ENCODE measurements at regions of chr3 and their contacts with region 1.

Region 1: DNA sequence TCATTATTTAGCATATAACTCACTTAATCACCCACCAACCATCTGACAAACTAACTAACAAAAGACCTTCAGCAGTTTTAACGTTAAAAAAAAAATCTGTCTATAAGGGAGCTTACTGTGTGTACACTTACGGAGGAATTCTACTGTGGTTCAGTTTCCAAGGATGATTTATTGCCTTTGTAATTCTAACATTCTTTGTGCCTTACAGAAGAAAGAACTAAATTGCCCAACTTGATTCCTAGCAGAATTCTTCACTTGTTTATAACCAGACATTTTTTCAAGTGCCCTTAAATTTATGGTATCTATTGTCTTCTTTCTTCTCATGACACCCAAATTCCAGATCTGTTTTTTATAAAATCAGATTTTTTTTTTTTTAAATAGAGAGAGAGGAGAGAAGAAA is 119.7 kb upstream of the IGSF10 start:
- DNase-seq: peak; percentile 23
- H3K4me3 ChIP-seq: no peak overlapping the region
- H3K27ac ChIP-seq: no peak overlapping the region
- H3K4me1 ChIP-seq: no peaks in the 10 kb centered on the region
- H3K27me3 ChIP-seq: peaks cover 5% of the 10 kb centered on the region
- CTCF ChIP-seq: no peak

Region 2: DNA sequence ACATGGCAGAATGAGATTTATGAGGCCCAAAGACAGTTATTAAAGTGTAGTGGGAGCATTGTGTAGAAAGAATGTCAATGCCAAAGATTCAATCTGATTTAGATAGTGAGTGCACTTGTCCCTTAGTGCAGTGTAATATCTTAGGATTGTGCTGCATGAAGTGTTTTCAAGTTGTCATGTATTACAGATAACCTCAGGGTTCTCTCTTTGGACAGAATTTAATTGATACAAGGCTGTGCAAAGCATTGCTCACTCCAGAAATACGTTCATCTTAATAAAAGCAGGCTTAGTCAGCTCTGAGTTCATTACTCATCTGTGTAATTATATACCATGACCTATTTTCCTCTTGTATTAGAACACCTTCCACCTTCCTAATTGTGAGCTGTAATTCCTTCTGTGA is 361.5 kb before region 1 on chr3:
- CTCF ChIA-PET with region 1: no interaction called
- dilution Hi-C with region 1: no loop called
- in situ Hi-C with region 1: no loop called
- intact Hi-C with region 1: no loop called
- DNase-seq: peak; percentile 82
- H3K4me3 ChIP-seq: no peak overlapping the region
- H3K27ac ChIP-seq: no peak overlapping the region
- H3K4me1 ChIP-seq: peaks cover 10% of the 10 kb centered on the region
- H3K27me3 ChIP-seq: no peaks in the 10 kb centered on the region
- CTCF ChIP-seq: no peak

Region 3: GRCh38 chr3:151611419-151611818 is 30.8 kb after region 1 on chr3:
- CTCF ChIA-PET with region 1: no interaction called
- dilution Hi-C with region 1: no loop called
- in situ Hi-C with region 1: no loop called
- intact Hi-C with region 1: no loop called
- DNase-seq: no peak
- H3K4me3 ChIP-seq: no peak overlapping the region
- H3K27ac ChIP-seq: no peak overlapping the region
- H3K4me1 ChIP-seq: no peaks in the 10 kb centered on the region
- H3K27me3 ChIP-seq: peaks cover 5% of the 10 kb centered on the region
- CTCF ChIP-seq: no peak

Region 4: DNA sequence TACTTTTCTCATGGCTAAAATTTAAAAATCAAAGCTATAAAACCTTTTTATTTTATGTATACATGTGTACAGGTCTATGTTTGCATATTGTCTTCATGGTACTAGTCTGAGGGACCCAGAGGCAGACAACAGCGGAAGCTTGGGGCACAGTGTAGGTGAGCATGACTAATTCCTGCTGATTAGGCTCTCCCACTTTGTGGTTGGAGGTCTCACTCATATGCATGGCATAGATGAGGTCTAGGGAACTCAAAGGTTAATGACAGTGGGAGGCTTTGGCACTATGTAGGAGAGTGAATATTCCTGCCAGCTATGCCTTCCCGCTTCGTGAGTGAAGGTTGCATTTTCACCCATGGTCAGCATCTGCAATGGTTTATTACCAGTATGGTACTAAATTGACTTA is 105.7 kb after region 1 on chr3:
- CTCF ChIA-PET with region 1: no interaction called
- dilution Hi-C with region 1: loop called (anchors 5 kb)
- in situ Hi-C with region 1: no loop called
- intact Hi-C with region 1: no loop called
- DNase-seq: peak; percentile 6
- H3K4me3 ChIP-seq: no peak overlapping the region
- H3K27ac ChIP-seq: no peak overlapping the region
- H3K4me1 ChIP-seq: no peaks in the 10 kb centered on the region
- H3K27me3 ChIP-seq: peaks cover 2% of the 10 kb centered on the region
- CTCF ChIP-seq: no peak

Measured in mammary epithelial cell (primary cell).